T-cell (primary cell): ENCODE measurements at regions of chr2 and their contacts with region 1.

Region 1: DNA sequence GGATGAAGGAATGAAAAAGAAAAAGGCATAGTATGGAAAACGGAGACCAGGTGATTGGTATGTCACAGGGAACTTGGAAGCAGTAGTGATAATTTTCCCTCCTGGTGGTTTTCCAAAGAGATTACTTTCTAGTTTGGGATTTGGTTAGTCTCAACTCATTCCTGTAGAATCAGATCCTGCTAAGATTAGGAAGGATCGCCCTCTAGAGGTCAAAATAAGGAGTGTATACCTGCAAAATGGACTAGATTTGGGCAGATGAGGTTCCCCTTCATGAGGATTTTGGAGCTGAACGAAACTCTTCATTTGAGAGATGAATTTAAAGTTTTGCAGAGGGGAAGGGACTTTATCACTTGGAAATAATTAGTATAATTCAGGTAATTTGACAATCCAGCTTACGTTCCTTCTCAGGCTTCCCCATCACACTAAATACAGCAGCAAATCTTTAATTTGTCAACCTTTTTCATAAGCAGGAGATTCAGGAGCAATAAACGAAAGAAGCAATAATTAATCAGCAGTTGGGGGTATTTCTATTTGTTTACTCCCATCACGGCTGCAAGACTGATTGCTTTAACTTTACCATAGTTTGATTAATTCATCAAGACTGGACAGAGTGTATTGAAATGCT is 65.2 kb downstream of the CCDC195 start:
- DNase-seq: peak in 4 of 35 experiments; percentile 2 to 72 (median 10)
- ATAC-seq: peak in 3 of 4 experiments; percentile 45 to 63 (median 56)
- H3K4me3 ChIP-seq: no peak overlapping the region
- H3K4me3 Mint-ChIP-seq: no peak overlapping the region
- H3K27ac ChIP-seq: no peak overlapping the region
- H3K27ac Mint-ChIP-seq: no peak overlapping the region
- H3K4me1 ChIP-seq: no peaks in the 10 kb centered on the region
- H3K4me1 Mint-ChIP-seq: peaks cover 2 to 5% (median 4%) of the 10 kb centered on the region in 3 donors
- H3K27me3 ChIP-seq: peaks cover 0 to 2% of the 10 kb centered on the region in 2 experiments
- H3K27me3 Mint-ChIP-seq: no peaks in the 10 kb centered on the region

Region 2: DNA sequence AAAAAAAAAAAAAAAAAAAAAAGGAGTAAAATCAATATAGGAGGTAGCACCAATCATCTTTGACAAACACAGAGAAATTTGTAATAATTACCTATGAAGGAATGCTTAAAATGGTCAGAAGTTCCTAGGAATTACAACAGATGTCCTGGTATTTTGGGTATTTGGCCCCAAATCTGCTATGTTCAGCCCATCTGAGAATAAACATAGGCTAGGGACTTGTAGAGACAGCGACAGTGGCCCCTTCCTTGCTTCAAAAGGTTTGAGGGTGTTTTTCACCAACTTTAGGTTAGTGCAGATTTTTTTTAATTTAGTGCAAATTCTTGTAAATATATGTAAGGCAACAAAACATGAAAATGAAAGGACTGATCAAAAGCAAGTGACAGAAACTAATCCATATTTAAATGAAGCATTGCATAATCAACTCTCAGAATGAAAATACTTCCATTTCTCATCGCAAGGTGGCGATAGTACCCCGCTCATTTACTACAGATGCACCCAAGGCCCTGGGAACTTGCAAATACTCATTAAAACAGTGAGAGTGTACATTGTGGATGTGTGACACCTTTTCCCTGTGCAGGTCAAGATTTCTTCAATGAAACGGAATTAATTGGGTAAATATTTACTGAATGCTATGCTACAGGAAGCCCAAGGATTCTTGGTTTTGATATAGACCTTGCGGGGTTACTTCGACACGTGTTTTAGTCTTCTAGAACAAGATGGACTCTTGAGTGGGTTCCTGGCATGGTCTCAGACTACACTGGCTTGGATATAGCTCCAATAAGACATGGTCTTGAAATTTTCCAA is 293.6 kb before region 1 on chr2:
- CTCF ChIA-PET with region 1: interaction called, 12 to 15 read pairs
- POLR2A ChIA-PET with region 1: interaction called in 1 of 2 experiments, 4 read pairs
- DNase-seq: peak in 32 of 35 experiments; percentile 9 to 79 (median 39)
- ATAC-seq: peak in 3 of 4 experiments; percentile 61 to 68 (median 62)
- H3K4me3 ChIP-seq: no peak overlapping the region
- H3K4me3 Mint-ChIP-seq: no peak overlapping the region
- H3K27ac ChIP-seq: no peak overlapping the region
- H3K27ac Mint-ChIP-seq: no peak overlapping the region
- H3K4me1 ChIP-seq: no peaks in the 10 kb centered on the region
- H3K4me1 Mint-ChIP-seq: no peaks in the 10 kb centered on the region
- H3K27me3 ChIP-seq: no peaks in the 10 kb centered on the region
- H3K27me3 Mint-ChIP-seq: peaks cover 9 to 14% of the 10 kb centered on the region in 2 donors